T-cell (primary cell): ENCODE measurements at regions of chr17 and their contacts with region 1.

Region 1: DNA sequence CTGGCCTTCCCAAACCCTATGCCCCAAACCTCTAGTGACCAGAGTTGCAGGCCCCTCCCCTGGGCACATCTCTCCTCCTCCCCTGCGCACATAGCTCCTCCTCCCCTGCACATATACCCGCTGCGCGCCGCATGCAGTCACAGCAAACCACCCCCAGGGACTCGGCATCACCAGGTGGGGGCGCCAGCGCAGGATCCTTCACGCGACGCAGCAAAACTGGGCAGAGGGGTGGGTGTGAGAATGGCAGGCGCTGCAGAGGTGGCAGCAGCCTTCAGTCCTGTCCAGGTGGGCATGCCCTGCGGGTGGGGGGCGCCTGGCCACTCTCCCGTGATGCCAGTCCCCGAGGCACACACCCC is 5.6 kb downstream of the CORO6 start:
- DNase-seq: peak; percentile 77 to 94 (median 87)
- ATAC-seq: peak; percentile 57 to 67 (median 62)
- H3K4me3 ChIP-seq: peak overlapping the region; percentile 53 to 57
- H3K4me3 Mint-ChIP-seq: peak overlapping the region; percentile 78 to 89 (median 87)
- H3K27ac ChIP-seq: no peak overlapping the region
- H3K27ac Mint-ChIP-seq: peak overlapping the region; percentile 36 to 69
- H3K4me1 ChIP-seq: peaks cover 30 to 64% of the 10 kb centered on the region in 2 experiments
- H3K4me1 Mint-ChIP-seq: peaks cover 35 to 47% (median 41%) of the 10 kb centered on the region in 3 donors
- H3K27me3 ChIP-seq: peaks cover 0 to 9% of the 10 kb centered on the region in 2 experiments
- H3K27me3 Mint-ChIP-seq: no peaks in the 10 kb centered on the region

Region 2: DNA sequence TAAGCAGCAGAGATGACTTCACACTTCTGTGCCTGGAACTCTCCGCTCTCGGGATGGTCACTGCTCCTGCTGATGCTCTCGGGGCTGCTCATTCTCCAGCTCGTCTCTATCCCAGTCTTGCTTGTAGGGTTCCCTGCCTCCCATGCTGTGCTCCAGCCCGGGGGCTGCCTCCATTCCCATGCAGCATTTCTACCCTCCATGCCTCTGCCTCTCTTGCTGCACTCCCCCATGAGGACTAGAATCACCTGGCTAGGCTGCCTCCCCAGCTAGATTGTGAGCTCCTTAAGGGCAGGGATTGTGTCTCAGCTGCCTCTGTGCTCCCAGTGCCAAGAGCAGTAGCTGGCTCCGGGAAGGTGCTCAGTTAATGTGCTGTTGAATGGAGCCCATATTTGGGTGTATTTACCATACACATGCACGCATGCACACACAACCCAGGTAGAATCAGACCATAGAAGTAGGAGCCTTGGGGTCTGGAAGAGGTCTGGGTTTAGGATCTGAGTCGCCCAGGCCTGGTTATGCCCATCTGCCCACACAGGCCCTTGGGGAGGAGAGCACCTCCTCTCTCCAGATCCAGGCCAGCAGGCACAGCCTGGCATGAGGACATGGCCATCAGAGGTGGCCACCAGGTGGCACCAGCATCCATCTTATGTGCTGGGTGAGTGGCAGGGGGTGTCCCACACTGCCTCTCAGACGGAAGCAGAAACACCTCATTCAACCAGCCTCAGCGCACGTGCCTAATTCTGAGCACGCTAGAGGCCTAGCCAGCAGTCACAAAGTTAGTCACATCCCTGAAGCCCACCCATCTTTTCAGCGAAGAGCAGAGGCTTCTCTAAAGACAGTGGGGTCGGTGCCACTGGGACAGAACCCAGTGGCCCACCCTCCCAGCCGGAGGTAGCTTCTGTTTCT is 37.0 kb before region 1 on chr17:
- CTCF ChIA-PET with region 1: interaction called, 5 to 14 read pairs
- POLR2A ChIA-PET with region 1: interaction called in 1 of 2 experiments, 8 read pairs
- DNase-seq: peak; percentile 78 to 95 (median 88)
- ATAC-seq: peak; percentile 93 to 99 (median 98)
- H3K4me3 ChIP-seq: no peak overlapping the region
- H3K4me3 Mint-ChIP-seq: no peak overlapping the region
- H3K27ac ChIP-seq: peak overlapping the region; percentile 44
- H3K27ac Mint-ChIP-seq: peak overlapping the region; percentile 84
- H3K4me1 ChIP-seq: peaks cover 2 to 28% of the 10 kb centered on the region in 2 experiments
- H3K4me1 Mint-ChIP-seq: peaks cover 20 to 24% (median 23%) of the 10 kb centered on the region in 3 donors
- H3K27me3 ChIP-seq: no peaks in the 10 kb centered on the region
- H3K27me3 Mint-ChIP-seq: no peaks in the 10 kb centered on the region

Region 3: DNA sequence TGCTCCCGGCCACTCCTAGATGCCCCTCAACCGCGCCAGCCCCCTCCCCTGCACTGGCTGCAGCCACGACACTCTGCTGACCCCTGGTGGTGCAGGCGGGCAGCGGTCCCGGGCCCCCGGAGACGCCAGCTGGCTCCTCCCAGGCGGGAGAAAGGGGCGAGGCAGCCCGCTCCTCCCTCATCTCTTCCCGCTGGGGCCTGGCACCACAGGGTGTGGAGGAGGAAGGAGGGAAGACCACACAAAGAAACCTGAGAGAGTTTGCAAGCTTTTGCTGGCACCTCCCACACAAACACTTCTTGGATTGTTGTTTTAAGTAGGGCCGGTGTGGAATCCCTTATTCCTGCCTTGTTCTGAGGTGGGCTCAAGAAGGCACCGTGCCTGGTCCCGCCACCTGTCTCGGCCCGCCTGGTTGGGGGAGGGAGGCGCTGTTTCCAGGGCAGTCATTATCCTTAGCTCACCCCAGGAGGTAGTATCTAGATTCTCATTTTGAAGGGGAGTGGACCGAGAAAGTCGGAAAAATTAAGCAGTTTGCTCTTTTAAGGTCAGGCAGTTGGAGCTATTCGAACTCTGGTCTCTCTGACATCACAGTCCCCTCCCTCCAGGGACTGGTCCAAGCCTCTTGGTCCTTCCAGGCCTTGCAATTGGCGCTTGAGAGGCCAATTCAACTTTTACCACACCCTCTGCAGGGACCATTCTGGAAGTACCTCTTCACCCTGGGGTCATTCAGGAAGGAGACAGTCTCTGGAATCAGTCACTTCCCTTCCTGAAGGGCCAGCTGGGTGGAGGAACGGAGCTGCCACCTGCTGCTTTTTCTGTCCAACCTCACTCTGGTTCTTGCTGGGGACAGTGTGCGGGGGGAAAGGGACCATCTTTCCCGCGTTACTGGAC is 25.1 kb before region 1 on chr17:
- CTCF ChIA-PET with region 1: interaction called, 3 to 56 read pairs
- POLR2A ChIA-PET with region 1: no interaction called
- DNase-seq: peak in 30 of 35 experiments; percentile 29 to 81 (median 60)
- ATAC-seq: peak; percentile 32 to 45 (median 32)
- H3K4me3 ChIP-seq: peak overlapping the region in 1 of 2 donors; percentile 16
- H3K4me3 Mint-ChIP-seq: peak overlapping the region; percentile 81 to 83 (median 83)
- H3K27ac ChIP-seq: no peak overlapping the region
- H3K27ac Mint-ChIP-seq: peak overlapping the region; percentile 72 to 91
- H3K4me1 ChIP-seq: peaks cover 31 to 65% of the 10 kb centered on the region in 2 experiments
- H3K4me1 Mint-ChIP-seq: peaks cover 39 to 50% (median 46%) of the 10 kb centered on the region in 3 donors
- H3K27me3 ChIP-seq: peaks cover 0 to 21% of the 10 kb centered on the region in 2 experiments
- H3K27me3 Mint-ChIP-seq: no peaks in the 10 kb centered on the region

Region 4: DNA sequence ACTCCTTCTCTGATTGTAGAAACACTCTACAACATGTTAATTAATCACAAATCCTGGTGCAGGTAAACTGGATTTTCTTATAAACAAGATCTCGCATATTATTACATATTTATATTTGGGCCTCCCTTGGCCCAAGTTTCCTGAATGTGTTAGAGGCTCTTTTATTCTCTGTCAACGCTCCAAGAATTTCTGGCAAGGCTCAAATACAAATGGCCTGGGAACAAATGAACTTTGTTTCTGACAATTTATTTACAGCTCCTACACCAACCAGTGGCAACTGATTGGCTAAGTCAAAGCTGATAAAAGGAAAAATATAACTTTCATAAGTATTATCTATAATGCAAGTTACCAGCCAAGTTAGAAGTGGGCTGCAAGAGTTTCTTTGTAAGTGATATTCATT is 70.5 kb after region 1 on chr17:
- CTCF ChIA-PET with region 1: no interaction called
- POLR2A ChIA-PET with region 1: no interaction called
- DNase-seq: no peak
- ATAC-seq: no peak
- H3K4me3 ChIP-seq: no peak overlapping the region
- H3K4me3 Mint-ChIP-seq: no peak overlapping the region
- H3K27ac ChIP-seq: no peak overlapping the region
- H3K27ac Mint-ChIP-seq: peak overlapping the region in 1 of 2 donors; percentile 12
- H3K4me1 ChIP-seq: peaks cover 0 to 6% of the 10 kb centered on the region in 2 experiments
- H3K4me1 Mint-ChIP-seq: peaks cover 25 to 29% (median 27%) of the 10 kb centered on the region in 3 donors
- H3K27me3 ChIP-seq: no peaks in the 10 kb centered on the region
- H3K27me3 Mint-ChIP-seq: no peaks in the 10 kb centered on the region

Region 5: DNA sequence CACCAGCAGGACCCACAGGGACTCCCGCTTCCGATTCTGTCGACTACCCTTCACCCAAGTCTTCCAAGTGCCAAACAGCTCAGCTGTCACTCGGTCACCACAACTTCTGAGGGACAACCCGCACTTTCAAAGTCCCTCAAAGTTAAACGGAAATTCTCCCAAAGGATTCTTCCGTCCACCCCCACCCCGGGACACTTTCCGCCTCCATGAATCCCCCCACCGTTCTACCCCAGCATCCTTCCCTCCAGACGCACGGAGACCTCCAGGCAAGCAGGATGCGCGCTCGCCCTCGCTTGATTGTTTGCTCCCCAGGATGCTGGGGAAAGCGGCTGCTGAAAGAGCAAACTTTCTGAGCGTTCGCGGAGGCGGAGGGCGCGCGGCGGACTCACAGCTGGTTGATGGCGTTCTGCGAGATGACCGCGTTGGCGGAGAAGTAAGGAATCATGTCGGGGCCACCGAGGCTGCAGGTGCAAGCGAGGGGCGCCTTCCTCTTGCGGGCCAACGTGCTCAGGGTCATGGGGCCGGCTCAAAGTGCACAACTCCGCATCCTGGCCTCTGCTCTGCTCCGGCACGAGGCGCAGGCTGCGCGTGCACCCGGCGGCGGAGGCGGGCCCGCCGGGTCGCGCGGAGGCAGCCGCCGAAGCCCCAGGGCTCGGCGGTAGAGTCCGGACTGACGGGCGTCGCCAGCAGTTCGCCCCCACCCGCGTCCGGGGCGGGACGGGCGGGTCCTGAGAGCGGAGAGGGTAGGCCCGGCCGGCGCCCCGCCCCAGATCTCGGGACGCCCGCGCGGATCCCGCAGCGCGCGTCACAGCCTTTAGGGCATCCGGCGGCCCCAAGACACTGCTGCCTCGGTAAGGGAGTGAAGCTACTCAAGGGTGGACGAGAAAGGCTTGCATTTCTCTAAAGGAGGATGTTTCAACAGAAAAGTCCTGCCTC is 143.9 kb after region 1 on chr17:
- CTCF ChIA-PET with region 1: interaction called in 1 of 2 experiments, 15 read pairs
- POLR2A ChIA-PET with region 1: no interaction called
- DNase-seq: peak; percentile 81 to 96 (median 92)
- ATAC-seq: peak; percentile 87 to 91 (median 88)
- H3K4me3 ChIP-seq: peak overlapping the region; percentile 85 to 96
- H3K4me3 Mint-ChIP-seq: peak overlapping the region; percentile 87 to 98 (median 91)
- H3K27ac ChIP-seq: peak overlapping the region; percentile 75
- H3K27ac Mint-ChIP-seq: peak overlapping the region; percentile 94 to 98
- H3K4me1 ChIP-seq: peaks cover 22 to 25% of the 10 kb centered on the region in 2 experiments
- H3K4me1 Mint-ChIP-seq: peaks cover 32 to 40% (median 40%) of the 10 kb centered on the region in 3 donors
- H3K27me3 ChIP-seq: no peaks in the 10 kb centered on the region
- H3K27me3 Mint-ChIP-seq: no peaks in the 10 kb centered on the region